PC-9 (cell line): ENCODE measurements at regions of chr12 and their contacts with region 1.

Region 1: DNA sequence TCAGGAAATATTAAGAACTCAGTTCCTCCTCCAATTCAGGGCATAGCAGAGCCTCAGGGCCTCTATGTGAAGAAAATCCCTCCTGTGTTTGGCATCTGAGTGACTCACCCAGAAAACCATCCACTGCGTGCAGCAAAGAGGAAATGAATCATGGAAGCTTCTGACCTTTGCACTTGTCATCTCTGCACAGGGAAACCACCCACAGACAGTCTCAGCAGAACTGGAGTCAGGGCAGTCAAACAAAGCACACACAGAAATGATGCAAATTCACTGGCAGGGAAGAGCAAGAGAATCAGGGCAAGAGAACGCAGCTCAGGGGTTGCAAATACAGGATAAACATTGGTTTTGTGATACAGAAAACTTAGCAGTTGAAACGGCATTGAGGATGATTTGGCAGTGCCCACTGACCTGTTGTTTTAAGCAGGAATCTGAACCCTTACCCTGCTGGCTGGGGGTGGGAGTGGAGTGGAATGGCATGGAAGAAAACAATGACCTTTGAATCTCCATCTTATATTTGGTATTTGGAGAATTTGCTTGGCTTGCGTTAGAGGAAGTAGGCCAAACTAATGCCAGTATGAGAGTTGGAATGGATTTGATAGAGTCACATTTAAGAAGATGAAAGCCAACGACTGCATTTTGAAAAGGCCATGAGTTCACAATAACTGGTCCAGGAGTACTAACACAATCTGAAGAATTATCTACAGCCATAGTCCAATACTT is 53.5 kb downstream of the PHLDA1 start:
- DNase-seq: peak; percentile 86 to 100
- H3K4me3 ChIP-seq: peak overlapping the region; percentile 28; the same call in 1 of the 2 replicates
- H3K27ac ChIP-seq: peak overlapping the region; percentile 99
- H3K4me1 ChIP-seq: peaks cover 64% of the 10 kb centered on the region
- H3K27me3 ChIP-seq: no peaks in the 10 kb centered on the region
- CTCF ChIP-seq: no peak

Region 2: DNA sequence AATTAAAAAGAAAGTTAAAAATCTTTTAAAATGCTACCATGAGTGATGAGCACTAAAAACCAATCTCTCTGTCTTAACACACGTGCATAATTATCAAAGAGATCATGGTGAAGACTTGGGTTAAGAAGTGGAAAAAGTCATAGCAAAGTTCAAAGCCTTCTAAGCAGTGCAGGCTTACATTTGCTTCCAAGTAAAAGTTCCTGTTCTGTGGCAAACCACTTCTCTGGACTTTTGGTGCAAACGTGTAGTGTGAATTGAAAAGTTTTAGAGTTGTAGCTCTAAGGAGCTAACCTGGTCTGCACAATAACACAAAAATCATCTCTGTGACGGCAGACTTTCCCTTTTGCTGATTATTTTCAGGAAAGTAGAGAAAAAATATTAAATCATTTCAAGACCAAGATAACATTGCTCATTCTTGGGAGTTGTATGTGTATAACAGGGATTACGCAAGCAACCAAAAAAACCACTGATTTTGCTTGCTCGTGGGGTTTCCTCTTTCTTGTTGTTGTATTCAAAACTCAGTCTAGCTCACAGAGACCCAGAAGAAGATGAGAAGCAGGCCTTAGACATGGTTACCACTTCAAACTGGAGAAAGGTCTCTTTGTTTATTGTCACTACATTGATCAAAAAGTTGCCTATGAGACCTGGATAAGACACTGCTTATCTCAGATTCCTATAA is 499.9 kb before region 1 on chr12:
- CTCF ChIA-PET with region 1: no interaction called
- POLR2A ChIA-PET with region 1: no interaction called
- intact Hi-C with region 1: no loop called
- DNase-seq: no peak
- H3K4me3 ChIP-seq: no peak overlapping the region
- H3K27ac ChIP-seq: no peak overlapping the region
- H3K4me1 ChIP-seq: peaks cover 11% of the 10 kb centered on the region; the same call in 1 of the 2 replicates
- H3K27me3 ChIP-seq: no peaks in the 10 kb centered on the region
- CTCF ChIP-seq: no peak

Region 3: GRCh38 chr12:75526655-75527511 is 451.2 kb before region 1 on chr12:
- CTCF ChIA-PET with region 1: no interaction called
- POLR2A ChIA-PET with region 1: no interaction called
- intact Hi-C with region 1: loop called (anchors 1 kb)
- DNase-seq: peak; percentile 3 to 40
- H3K4me3 ChIP-seq: no peak overlapping the region
- H3K27ac ChIP-seq: no peak overlapping the region
- H3K4me1 ChIP-seq: no peaks in the 10 kb centered on the region; the same call in 1 of the 2 replicates
- H3K27me3 ChIP-seq: no peaks in the 10 kb centered on the region
- CTCF ChIP-seq: peak; percentile 82

Region 4: DNA sequence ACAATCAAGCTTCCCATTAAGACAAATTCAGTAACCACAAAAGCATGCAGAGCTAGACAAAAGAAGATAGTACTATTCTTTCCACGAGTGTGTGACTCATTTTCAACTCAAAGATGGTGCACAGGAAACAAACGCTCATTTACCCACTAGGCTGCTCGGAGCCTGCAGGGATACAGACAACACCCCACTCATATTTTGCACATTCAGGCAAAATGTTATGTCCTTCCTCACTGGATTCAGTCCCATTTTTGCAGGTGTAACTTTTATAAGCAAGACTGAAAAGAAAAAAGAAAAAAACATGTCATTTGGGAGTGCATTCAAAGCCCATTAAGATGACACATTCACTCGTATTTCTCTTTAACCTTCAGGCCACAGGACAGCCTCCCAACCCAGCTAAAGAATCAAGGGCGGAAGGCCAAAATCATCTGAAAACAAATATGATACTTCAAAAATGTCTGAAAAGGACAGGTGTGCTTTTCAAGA is 319.2 kb before region 1 on chr12:
- CTCF ChIA-PET with region 1: no interaction called
- POLR2A ChIA-PET with region 1: interaction called, 4 read pairs
- intact Hi-C with region 1: loop called (anchors 5 kb)
- DNase-seq: peak in 1 of 2 experiments; percentile 31
- H3K4me3 ChIP-seq: no peak overlapping the region
- H3K27ac ChIP-seq: no peak overlapping the region
- H3K4me1 ChIP-seq: peaks cover 28% of the 10 kb centered on the region
- H3K27me3 ChIP-seq: no peaks in the 10 kb centered on the region
- CTCF ChIP-seq: no peak

Region 5: DNA sequence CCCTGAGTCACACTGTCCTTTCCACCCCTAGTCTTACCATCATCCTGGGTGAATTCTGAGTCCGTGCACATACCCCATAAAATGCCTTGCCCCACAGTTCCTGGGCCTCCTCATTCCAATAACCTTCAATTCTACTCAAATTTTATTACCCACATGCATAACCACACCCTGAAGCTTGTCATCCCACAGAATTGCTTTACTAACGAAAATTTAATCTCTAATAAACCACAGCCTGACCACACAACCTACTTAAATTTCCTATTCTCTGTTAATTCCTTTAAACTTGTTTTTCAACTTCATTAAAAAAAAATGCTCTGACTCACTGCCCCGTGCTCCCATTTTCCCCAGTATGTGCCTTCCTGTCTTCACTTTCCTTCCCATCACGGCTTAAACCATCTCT is 152.4 kb before region 1 on chr12:
- CTCF ChIA-PET with region 1: no interaction called
- POLR2A ChIA-PET with region 1: no interaction called
- intact Hi-C with region 1: loop called (anchors 1 kb)
- DNase-seq: peak; percentile 40 to 94
- H3K4me3 ChIP-seq: peak overlapping the region; percentile 21; the same call in 1 of the 2 replicates
- H3K27ac ChIP-seq: peak overlapping the region; percentile 87
- H3K4me1 ChIP-seq: peaks cover 41% of the 10 kb centered on the region
- H3K27me3 ChIP-seq: no peaks in the 10 kb centered on the region
- CTCF ChIP-seq: no peak

Region 6: GRCh38 chr12:75933101-75933500 is 45.0 kb before region 1 on chr12:
- CTCF ChIA-PET with region 1: interaction called, 10 read pairs
- POLR2A ChIA-PET with region 1: no interaction called
- intact Hi-C with region 1: no loop called
- DNase-seq: no peak
- H3K4me3 ChIP-seq: no peak overlapping the region
- H3K27ac ChIP-seq: peak overlapping the region; percentile 62; the same call in 1 of the 2 replicates
- H3K4me1 ChIP-seq: peaks cover 40% of the 10 kb centered on the region
- H3K27me3 ChIP-seq: no peaks in the 10 kb centered on the region
- CTCF ChIP-seq: no peak

Region 7: GRCh38 chr12:75954041-75954440 is 24.1 kb before region 1 on chr12:
- CTCF ChIA-PET with region 1: interaction called, 7 read pairs
- POLR2A ChIA-PET with region 1: no interaction called
- intact Hi-C with region 1: loop called (anchors 1 kb)
- DNase-seq: peak; percentile 57 to 99
- H3K4me3 ChIP-seq: peak overlapping the region; percentile 19; the same call in 1 of the 2 replicates
- H3K27ac ChIP-seq: peak overlapping the region; percentile 97
- H3K4me1 ChIP-seq: peaks cover 67% of the 10 kb centered on the region
- H3K27me3 ChIP-seq: no peaks in the 10 kb centered on the region
- CTCF ChIP-seq: no peak

Region 8: DNA sequence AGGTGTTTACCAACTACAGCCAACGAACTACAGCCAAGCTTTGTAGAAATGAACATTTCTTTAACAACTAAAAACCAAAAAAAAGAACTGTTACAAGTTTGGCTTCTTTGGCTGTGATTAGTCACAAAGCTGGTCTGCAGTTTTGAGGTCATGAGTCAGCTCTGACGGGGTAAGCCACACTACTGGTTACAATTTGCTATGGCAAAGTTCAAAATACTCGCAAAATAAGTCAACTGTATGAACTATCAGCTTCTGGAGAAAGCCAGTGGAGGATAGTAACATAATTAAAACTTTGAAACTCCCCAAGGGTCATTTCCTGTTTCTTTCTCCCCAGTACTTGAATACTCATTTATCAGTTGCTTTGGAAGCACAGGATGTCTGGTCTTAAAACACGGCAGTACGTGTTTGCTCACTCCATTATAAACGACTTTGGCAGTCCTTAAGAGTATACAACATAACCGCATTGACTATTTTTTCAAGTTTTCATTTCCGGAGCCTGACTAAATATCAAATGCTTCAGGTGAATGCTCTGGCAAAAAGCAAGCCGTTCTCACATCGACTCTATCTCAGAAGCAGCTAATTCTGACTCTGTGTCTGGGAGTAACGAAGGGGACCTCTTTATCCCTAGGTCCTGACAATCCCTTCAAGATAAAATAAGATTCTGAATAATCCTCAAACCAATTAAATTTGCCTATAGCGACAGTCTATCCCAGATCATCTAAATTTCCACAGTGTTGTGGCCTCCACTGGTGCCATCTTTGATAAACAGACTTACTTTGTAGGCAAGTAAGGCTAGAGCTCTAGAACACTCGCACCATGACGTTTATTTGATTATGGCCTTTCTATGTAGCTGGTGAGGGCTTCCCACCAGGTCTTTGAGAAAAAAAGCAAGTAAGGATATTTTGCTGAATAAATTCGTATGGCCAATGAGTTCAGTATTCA is 42.9 kb after region 1 on chr12:
- CTCF ChIA-PET with region 1: no interaction called
- POLR2A ChIA-PET with region 1: interaction called, 6 read pairs
- intact Hi-C with region 1: loop called (anchors 1 kb)
- DNase-seq: peak; percentile 58 to 95
- H3K4me3 ChIP-seq: peak overlapping the region; percentile 55
- H3K27ac ChIP-seq: peak overlapping the region; percentile 100
- H3K4me1 ChIP-seq: peaks cover 79% of the 10 kb centered on the region
- H3K27me3 ChIP-seq: no peaks in the 10 kb centered on the region
- CTCF ChIP-seq: no peak